OCI-LY7 (cell line): ENCODE measurements at regions of chr7 and their contacts with region 1.

Region 1: GRCh38 chr7:46352004-46352954 is 431.2 kb upstream of the IGFBP3 start:
- DNase-seq: peak; percentile 25
- H3K4me3 ChIP-seq: no peak overlapping the region
- H3K27ac ChIP-seq: no peak overlapping the region
- H3K4me1 ChIP-seq: no peaks in the 10 kb centered on the region
- CTCF ChIP-seq: peak; percentile 72

Region 2: DNA sequence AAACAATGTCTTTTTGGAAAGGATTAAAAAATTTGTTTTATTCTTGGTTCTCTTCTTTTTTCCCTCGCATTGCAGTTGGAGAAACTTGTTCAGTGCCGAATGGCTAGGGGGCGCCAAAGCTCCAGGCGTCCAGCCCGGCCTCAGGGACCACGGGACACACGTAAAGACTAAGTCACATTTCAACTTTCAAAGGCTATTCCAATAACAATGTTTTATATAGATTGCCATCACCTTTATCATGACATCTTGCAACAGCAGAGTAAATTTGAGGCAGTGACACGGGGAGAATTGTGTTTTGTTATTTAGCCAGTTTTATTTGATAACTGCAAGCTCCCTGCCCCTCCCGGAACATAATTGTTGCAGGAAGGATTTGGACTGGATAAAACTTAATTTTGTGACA is 429.0 kb before region 1 on chr7:
- CTCF ChIA-PET with region 1: no interaction called
- POLR2A ChIA-PET with region 1: no interaction called
- intact Hi-C with region 1: loop called (anchors 10 kb)
- DNase-seq: peak; percentile 57
- H3K4me3 ChIP-seq: no peak overlapping the region
- H3K27ac ChIP-seq: no peak overlapping the region
- H3K4me1 ChIP-seq: peaks cover 4% of the 10 kb centered on the region
- CTCF ChIP-seq: peak; percentile 99

Region 3: GRCh38 chr7:46282155-46282554 is 70.1 kb before region 1 on chr7:
- CTCF ChIA-PET with region 1: no interaction called
- POLR2A ChIA-PET with region 1: no interaction called
- intact Hi-C with region 1: loop called (anchors 10 kb)
- DNase-seq: no peak
- H3K4me3 ChIP-seq: no peak overlapping the region
- H3K27ac ChIP-seq: no peak overlapping the region
- H3K4me1 ChIP-seq: no peaks in the 10 kb centered on the region
- CTCF ChIP-seq: no peak